Left lung (tissue), 14 donors: ENCODE measurements at regions of chr3 and their contacts with region 1.

Region 1: GRCh38 chr3:129942296-129942695 is 32.2 kb upstream of the TRH start:
- DNase-seq: peak in 3 of 4 donors; percentile 50 to 73 (median 55)
- ATAC-seq: peak; percentile 93
- H3K4me3 ChIP-seq: no peak overlapping the region
- H3K27ac ChIP-seq: no peak overlapping the region
- H3K4me1 ChIP-seq: no peaks in the 10 kb centered on the region
- H3K27me3 ChIP-seq: no peaks in the 10 kb centered on the region
- CTCF ChIP-seq: peak; percentile 71 to 86

Region 2: DNA sequence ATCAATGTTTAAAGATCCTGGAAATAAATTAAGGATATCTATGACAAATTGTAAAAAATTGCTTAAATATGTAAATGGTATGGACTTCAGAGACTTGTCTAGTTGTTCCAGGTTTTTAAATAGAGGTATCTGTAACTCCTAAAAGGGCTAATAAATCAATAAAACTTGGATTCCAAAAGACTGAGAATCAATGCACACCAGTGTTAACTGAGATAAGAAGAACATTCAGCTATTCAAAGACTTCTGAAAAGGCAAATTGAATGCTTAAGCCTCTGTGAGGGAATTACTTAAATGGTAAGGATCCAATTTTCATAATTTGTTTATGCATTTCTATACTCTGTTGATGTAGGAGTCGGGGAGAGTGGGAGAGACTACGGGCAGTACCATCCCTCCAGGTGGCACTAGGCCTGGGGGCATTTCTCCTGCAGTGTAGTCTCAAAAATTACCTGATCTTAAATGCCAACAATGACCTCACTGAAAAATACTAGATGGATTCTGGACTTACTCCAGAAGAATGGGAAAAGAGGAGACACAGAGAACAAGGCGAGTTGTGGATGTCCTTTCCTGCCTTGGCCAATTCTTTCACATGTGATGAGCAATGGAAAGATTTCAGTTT is 258.1 kb before region 1 on chr3:
- intact Hi-C with region 1: no loop called
- DNase-seq: no peak
- ATAC-seq: no peak
- H3K4me3 ChIP-seq: no peak overlapping the region
- H3K27ac ChIP-seq: no peak overlapping the region
- H3K4me1 ChIP-seq: peaks cover 0 to 6% of the 10 kb centered on the region in 2 donors
- H3K27me3 ChIP-seq: no peaks in the 10 kb centered on the region
- CTCF ChIP-seq: no peak

Region 3: GRCh38 chr3:130093741-130094391 is 151.6 kb after region 1 on chr3:
- intact Hi-C with region 1: loop called in 1 of 2 experiments (anchors 10 kb)
- DNase-seq: peak in 1 of 4 donors; percentile 43
- ATAC-seq: no peak
- H3K4me3 ChIP-seq: peak overlapping the region in 1 of 2 donors; percentile 17
- H3K27ac ChIP-seq: peak overlapping the region in 1 of 2 donors; percentile 58
- H3K4me1 ChIP-seq: peaks cover 0 to 21% of the 10 kb centered on the region in 2 donors
- H3K27me3 ChIP-seq: no peaks in the 10 kb centered on the region
- CTCF ChIP-seq: no peak